HEK293 (cell line): ENCODE measurements at regions of chr12 and their contacts with region 1.

Region 1: DNA sequence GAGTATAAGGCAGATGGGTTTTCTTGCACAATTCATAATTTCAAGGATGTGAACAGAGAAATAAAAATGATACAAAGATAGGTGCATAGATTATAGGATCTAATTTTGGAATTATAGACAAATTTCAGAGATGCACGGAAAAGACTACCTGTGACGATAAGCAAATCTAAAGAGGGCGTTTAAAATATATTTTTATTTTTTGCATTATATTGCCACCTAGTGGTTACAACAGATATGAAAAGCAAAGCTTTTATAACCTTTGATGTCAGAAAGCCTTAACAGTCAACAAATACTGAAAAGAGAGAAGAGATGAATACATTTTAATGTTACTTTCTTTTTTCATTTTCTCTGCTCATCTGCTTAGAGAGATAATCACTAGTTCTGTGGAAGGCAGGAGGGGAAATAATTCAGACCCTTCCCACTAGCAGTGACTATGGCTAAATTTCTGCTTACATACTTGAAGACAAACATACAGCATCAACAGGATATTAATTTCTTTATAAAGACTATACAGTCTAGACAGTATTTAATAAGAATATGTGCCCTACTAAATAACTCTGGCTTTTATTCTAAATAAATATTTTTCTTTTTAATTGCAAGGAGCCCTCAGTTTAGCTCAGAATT is 46.3 kb downstream of the NTS start:
- H3K4me3 ChIP-seq: no peak overlapping the region
- H3K27ac ChIP-seq: no peak overlapping the region
- H3K4me1 ChIP-seq: no peaks in the 10 kb centered on the region
- CTCF ChIP-seq: no peak

Region 2: DNA sequence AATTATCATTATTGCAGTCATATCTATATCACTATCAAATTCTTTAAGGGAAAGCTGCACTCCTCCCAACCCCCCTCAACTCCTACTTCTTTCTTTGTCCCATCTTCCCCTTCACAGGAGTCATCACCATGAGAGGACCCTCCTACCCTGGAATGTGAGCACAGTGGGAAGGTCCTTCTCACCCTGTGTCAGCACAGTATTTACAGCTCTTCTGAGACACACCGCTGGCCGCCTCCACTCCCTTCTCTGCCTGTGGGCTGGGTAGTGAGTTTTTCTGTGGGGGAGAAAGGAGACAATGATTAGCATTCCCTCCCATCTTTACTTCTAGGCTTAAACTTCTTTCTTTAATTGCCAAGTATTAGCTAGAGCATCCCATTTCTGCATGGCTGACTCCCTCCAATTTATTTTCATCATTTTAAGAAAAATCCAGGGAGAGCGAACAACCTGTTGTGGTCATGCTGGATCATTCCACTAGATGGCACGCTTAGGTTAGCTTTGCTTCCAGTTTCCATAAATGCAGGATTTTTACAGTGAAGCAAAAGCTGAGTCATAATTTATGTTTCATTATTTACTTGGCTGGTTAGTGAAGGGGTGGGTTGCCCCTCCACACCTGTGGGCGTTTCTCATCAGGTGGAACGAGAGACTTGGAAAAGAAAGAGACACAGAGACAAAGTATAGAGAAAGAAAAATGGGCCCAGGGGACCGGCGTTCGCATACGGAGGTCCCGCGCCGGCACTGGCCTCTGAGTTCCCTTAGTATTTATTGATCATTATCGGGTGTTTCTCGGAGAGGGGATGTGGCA is 451.9 kb before region 1 on chr12:
- CTCF ChIA-PET with region 1: interaction called, 16 read pairs
- POLR2A ChIA-PET with region 1: no interaction called
- H3K4me3 ChIP-seq: peak overlapping the region; percentile 20
- H3K27ac ChIP-seq: no peak overlapping the region
- H3K4me1 ChIP-seq: 0 out of 2 replicates have a peak, but pooled peaks cover 2% of the 10 kb centered on the region
- CTCF ChIP-seq: peak; percentile 67; the same call in 1 of the 2 replicates

Region 3: GRCh38 chr12:85476756-85477155 is 443.7 kb before region 1 on chr12:
- CTCF ChIA-PET with region 1: interaction called, 11 read pairs
- POLR2A ChIA-PET with region 1: no interaction called
- H3K4me3 ChIP-seq: no peak overlapping the region
- H3K27ac ChIP-seq: no peak overlapping the region
- H3K4me1 ChIP-seq: no peaks in the 10 kb centered on the region
- CTCF ChIP-seq: no peak

Region 4: DNA sequence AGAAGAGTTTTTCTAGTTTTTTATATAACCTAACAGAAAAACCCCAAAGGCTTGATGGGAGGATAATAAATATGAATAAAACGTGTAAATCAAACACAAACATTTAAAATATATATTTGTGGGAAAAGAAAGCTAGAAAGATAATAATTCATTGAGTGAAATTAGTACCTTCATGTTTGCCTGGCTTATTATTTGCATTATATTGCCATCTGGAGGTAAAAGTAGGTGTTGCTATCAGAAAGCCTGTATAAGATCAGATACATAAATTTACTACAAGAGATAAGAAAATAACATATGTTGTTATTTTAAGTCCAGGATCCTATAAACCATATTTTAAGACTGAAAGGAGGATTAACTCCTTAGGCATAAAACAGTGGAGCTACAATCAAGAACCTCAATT is 31.4 kb after region 1 on chr12:
- CTCF ChIA-PET with region 1: interaction called, 22 read pairs
- POLR2A ChIA-PET with region 1: no interaction called
- H3K4me3 ChIP-seq: no peak overlapping the region
- H3K27ac ChIP-seq: no peak overlapping the region
- H3K4me1 ChIP-seq: no peaks in the 10 kb centered on the region
- CTCF ChIP-seq: no peak